Astrocyte of the cerebellum (primary cell): ENCODE measurements at regions of chr3 and their contacts with region 1.

Region 1: DNA sequence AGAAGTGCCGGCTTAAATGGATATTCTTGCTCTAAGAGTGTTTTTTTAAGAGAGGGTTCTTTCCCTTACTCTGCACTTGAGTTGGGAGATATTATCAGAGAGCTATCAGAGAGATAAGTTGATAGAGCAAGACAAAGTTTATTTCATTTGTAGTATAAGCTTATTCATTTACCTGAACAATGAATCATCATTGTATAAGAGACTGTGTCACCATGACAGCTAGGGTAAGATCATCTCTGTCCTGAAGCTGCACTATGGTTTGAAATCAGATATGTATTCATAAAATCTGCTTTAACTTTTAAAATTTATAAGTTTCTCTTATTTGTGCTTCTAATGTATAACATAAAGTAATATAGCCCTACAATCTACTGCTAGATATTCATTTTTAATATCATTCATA is 128.1 kb upstream of the ARL6 start:
- DNase-seq: no peak
- H3K4me3 ChIP-seq: no peak overlapping the region
- CTCF ChIP-seq: no peak

Region 2: DNA sequence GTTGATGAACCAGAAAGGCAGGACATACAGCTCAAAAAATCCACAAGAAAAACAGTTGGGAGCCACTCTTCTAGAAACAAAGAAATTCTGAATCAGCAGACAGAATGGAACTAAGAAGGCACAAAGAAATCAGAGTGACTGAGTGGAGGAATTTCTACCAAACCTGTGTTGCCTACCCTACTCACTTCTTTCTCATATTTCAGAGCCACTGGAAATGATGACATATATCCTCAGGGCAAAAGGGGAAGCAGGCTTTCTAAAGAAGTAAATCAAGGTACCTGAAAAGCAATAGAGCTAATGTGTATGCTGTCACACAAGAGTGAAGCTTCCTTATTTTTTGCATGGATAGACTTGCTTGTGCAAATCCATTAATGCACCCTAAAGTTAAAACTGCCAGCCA is 77.1 kb before region 1 on chr3:
- in situ Hi-C with region 1: loop called (anchors 5 kb)
- DNase-seq: no peak
- H3K4me3 ChIP-seq: no peak overlapping the region
- CTCF ChIP-seq: no peak